HepG2 (cell line): ENCODE measurements at regions of chr3 and their contacts with region 1.

Region 1: GRCh38 chr3:169041677-169042171 is 621.8 kb downstream of the MECOM start:
- DNase-seq: peak; percentile 12
- ATAC-seq: peak; percentile 46; the same call in 1 of the 3 replicates
- H3K4me3 ChIP-seq: no peak overlapping the region
- H3K27ac ChIP-seq: no peak overlapping the region
- H3K4me1 ChIP-seq: no peaks in the 10 kb centered on the region
- H3K27me3 ChIP-seq: no peaks in the 10 kb centered on the region
- CTCF ChIP-seq: no peak
- EP300 ChIP-seq: no peak
- POLR2A ChIP-seq: no peak
- RAD21 ChIP-seq: no peak

Region 2: GRCh38 chr3:169744366-169745054 is 702.8 kb after region 1 on chr3:
- CTCF ChIA-PET with region 1: no interaction called
- POLR2A ChIA-PET with region 1: no interaction called
- in situ Hi-C with region 1: no loop called
- intact Hi-C with region 1: loop called (anchors 10 kb)
- DNase-seq: no peak
- ATAC-seq: no peak
- H3K4me3 ChIP-seq: no peak overlapping the region
- H3K27ac ChIP-seq: no peak overlapping the region
- H3K4me1 ChIP-seq: no peaks in the 10 kb centered on the region
- H3K27me3 ChIP-seq: peaks cover 0 to 5% of the 10 kb centered on the region in 2 experiments; a peak in 2 of 5 replicates
- CTCF ChIP-seq: peak; percentile 40
- EP300 ChIP-seq: no peak
- POLR2A ChIP-seq: no peak
- RAD21 ChIP-seq: no peak